ENCODE measurements at regions of chr1 and their contacts with region 1.

Region 1: GRCh38 chr1:214427871-214428277 is 123.5 kb downstream of the PTPN14 start:
- DNase-seq: peak; percentile 89
- H3K4me3 Mint-ChIP-seq: peak overlapping the region; percentile 41
- H3K27ac Mint-ChIP-seq: peak overlapping the region; percentile 90
- H3K4me1 Mint-ChIP-seq: peaks cover 26% of the 10 kb centered on the region
- H3K27me3 Mint-ChIP-seq: no peaks in the 10 kb centered on the region

Region 2: GRCh38 chr1:212566522-212567479 is 1861.1 kb before region 1 on chr1:
- CTCF ChIA-PET with region 1: no interaction called
- intact Hi-C with region 1: loop called (anchors 2 kb)
- DNase-seq: peak; percentile 80
- H3K4me3 Mint-ChIP-seq: peak overlapping the region; percentile 78
- H3K27ac Mint-ChIP-seq: peak overlapping the region; percentile 88
- H3K4me1 Mint-ChIP-seq: peaks cover 32% of the 10 kb centered on the region
- H3K27me3 Mint-ChIP-seq: no peaks in the 10 kb centered on the region

Region 3: DNA sequence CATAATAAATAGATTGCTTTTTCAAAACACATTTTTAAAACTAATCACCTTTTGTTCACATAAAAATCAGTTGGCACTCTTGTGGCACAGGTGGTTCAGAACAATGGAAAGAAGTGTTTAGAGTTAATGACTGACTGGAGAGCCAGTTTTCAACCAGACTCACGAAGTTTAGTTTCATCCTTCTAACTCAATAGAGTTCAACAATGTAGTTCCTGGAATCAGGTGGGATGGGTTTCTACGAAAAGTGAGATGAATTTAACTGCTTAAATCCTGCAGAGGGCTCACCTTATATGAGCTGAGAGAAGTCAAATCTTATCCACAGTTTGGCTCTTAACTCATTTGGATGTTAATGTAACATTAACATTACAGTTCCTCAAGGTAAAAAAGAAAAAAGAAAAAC is 30.4 kb before region 1 on chr1:
- CTCF ChIA-PET with region 1: interaction called, 3 read pairs
- intact Hi-C with region 1: loop called (anchors 2 kb)
- DNase-seq: no peak
- H3K4me3 Mint-ChIP-seq: no peak overlapping the region
- H3K27ac Mint-ChIP-seq: no peak overlapping the region
- H3K4me1 Mint-ChIP-seq: peaks cover 26% of the 10 kb centered on the region
- H3K27me3 Mint-ChIP-seq: no peaks in the 10 kb centered on the region

Region 4: GRCh38 chr1:214566158-214567104 is 138.6 kb after region 1 on chr1:
- CTCF ChIA-PET with region 1: no interaction called
- intact Hi-C with region 1: loop called (anchors 1 kb)
- DNase-seq: peak; percentile 55
- H3K4me3 Mint-ChIP-seq: no peak overlapping the region
- H3K27ac Mint-ChIP-seq: peak overlapping the region; percentile 36
- H3K4me1 Mint-ChIP-seq: peaks cover 10% of the 10 kb centered on the region
- H3K27me3 Mint-ChIP-seq: peaks cover 7% of the 10 kb centered on the region

Region 5: GRCh38 chr1:214637722-214638458 is 210.0 kb after region 1 on chr1:
- CTCF ChIA-PET with region 1: no interaction called
- intact Hi-C with region 1: loop called (anchors 5 kb)
- DNase-seq: peak; percentile 32
- H3K4me3 Mint-ChIP-seq: no peak overlapping the region
- H3K27ac Mint-ChIP-seq: peak overlapping the region; percentile 37
- H3K4me1 Mint-ChIP-seq: peaks cover 38% of the 10 kb centered on the region
- H3K27me3 Mint-ChIP-seq: no peaks in the 10 kb centered on the region

Region 6: DNA sequence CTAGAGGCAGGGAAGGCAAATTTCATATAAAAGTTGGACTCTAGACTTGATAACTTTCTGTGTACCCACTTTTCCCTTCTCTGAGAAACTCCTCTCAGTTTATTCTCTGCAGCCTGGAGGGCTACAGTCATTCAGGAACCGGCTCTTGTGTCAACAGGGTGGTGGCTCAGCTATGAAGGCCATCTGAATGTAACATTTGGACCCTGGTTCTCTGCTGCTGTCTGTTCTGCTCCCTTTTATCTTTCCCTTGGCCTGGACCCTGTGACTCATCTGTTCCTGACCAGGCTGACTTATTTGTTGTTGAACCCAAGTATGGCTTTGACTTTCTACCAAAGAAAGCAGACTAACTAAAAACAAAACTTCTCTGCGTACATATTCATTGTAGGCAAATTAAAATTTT is 250.5 kb after region 1 on chr1:
- CTCF ChIA-PET with region 1: no interaction called
- intact Hi-C with region 1: no loop called
- DNase-seq: no peak
- H3K4me3 Mint-ChIP-seq: no peak overlapping the region
- H3K27ac Mint-ChIP-seq: no peak overlapping the region
- H3K4me1 Mint-ChIP-seq: no peaks in the 10 kb centered on the region
- H3K27me3 Mint-ChIP-seq: no peaks in the 10 kb centered on the region